Aorta (tissue), 5 donors: ENCODE measurements at regions of chr5 and their contacts with region 1.

Region 1: GRCh38 chr5:120139039-120139438 is 325.1 kb upstream of the PRR16 start:
- DNase-seq: no peak
- ATAC-seq: peak; percentile 83
- H3K4me3 ChIP-seq: no peak overlapping the region
- H3K27ac ChIP-seq: no peak overlapping the region
- H3K4me1 ChIP-seq: peaks cover 0 to 4% of the 10 kb centered on the region in 2 donors
- H3K27me3 ChIP-seq: no peaks in the 10 kb centered on the region

Region 2: GRCh38 chr5:120055858-120056257 is 83.2 kb before region 1 on chr5:
- intact Hi-C with region 1: loop called in 1 of 2 experiments (anchors 10 kb)
- DNase-seq: no peak
- ATAC-seq: peak; percentile 64
- H3K4me3 ChIP-seq: no peak overlapping the region
- H3K27ac ChIP-seq: peak overlapping the region in 1 of 2 donors; percentile 28
- H3K4me1 ChIP-seq: no peaks in the 10 kb centered on the region
- H3K27me3 ChIP-seq: no peaks in the 10 kb centered on the region

Region 3: DNA sequence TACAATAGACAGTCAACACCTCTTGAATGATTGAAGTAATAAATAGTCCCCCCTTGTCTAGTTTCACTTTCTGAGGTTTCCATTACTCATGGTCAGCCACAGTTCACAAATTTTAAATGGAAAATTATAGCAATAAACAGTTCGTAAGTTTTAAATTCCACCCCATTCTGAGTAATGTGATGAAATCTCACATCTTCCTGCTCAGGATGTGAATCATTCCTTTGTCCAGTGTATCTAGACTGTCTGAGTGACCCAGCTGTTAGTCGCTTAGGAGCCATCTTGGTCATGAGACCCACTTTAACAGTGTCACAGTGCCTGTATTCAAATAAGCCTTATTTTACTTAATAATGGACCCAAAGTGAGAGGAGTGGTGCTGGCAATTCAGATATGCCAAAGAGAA is 13.4 kb after region 1 on chr5:
- intact Hi-C with region 1: loop called in 1 of 2 experiments (anchors 2 kb)
- DNase-seq: no peak
- ATAC-seq: no peak
- H3K4me3 ChIP-seq: no peak overlapping the region
- H3K27ac ChIP-seq: no peak overlapping the region
- H3K4me1 ChIP-seq: no peaks in the 10 kb centered on the region
- H3K27me3 ChIP-seq: no peaks in the 10 kb centered on the region

Region 4: GRCh38 chr5:120174089-120174488 is 35.0 kb after region 1 on chr5:
- intact Hi-C with region 1: no loop called
- DNase-seq: no peak
- ATAC-seq: peak; percentile 46
- H3K4me3 ChIP-seq: no peak overlapping the region
- H3K27ac ChIP-seq: no peak overlapping the region
- H3K4me1 ChIP-seq: no peaks in the 10 kb centered on the region
- H3K27me3 ChIP-seq: no peaks in the 10 kb centered on the region

Region 5: DNA sequence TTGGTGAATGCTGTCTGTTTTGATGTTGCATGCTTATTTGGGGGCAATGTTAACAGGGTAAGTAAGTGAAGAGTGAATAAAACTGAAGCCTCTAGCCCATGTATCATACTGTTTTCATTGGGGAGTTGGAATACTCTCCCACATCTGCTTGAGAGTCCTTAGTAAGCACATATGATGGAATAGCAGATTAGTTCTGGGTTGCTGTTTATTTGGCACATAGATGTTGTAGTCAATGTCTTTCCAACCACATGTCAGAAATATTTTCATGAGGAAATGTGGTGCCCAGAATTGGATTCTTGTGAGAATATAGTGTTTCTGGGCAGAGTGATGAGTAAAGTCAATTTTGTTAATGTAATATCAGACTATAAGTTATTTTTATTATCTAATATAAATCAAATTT is 1100.9 kb after region 1 on chr5:
- intact Hi-C with region 1: no loop called
- DNase-seq: no peak
- ATAC-seq: no peak
- H3K4me3 ChIP-seq: no peak overlapping the region
- H3K27ac ChIP-seq: no peak overlapping the region
- H3K4me1 ChIP-seq: no peaks in the 10 kb centered on the region
- H3K27me3 ChIP-seq: no peaks in the 10 kb centered on the region